CD8-positive, alpha-beta T cell (primary cell): ENCODE measurements at regions of chr4 and their contacts with region 1.

Region 1: DNA sequence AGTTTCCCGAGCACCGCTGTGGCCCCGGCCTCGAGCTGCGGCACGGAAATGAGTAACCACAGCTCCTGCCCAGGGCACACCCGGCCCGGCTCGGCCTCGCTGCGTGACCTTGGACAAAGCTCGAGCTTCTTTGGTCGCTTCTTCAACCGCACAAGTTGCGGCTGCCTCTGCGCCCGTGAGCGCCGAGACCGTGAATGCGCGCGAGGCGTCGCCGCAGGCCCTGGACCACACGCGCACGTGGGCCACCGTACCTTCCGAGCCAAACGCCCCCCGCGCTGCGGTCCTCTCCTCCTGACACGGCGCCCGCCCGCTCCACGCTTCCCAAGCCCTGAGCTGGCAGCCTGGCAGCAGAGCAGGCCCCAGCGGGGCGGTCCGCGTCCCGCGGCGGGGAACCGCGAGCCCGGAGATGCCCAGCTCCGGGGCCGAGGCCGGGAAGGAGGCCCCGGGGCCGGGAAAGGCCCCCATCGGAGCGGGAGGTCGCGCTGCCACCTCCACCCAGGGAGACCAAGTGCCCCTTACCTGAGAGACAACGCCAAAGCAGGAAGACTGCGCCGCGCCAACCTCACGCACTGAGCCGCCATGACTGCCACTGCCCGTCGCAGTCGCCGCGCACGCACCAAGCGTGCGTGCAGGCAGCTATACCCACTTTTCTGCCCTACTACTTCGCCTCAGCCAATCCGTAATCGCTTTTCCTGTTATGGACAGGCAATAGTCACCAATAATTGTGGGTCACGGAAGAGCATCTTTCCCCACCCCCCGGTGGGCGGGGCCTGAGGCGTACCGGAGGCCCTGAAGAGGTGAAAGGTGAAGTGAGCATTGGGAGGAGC is at the start of gene GRPEL1:
- DNase-seq: peak; percentile 100
- ATAC-seq: peak; percentile 92
- H3K4me3 ChIP-seq: peak within 1 kb of the TSS; percentile 86 to 87
- H3K4me3 Mint-ChIP-seq: peak within 1 kb of the TSS; percentile 95
- H3K27ac ChIP-seq: peak within 1 kb of the TSS; percentile 83 to 89
- H3K27ac Mint-ChIP-seq: peak within 1 kb of the TSS; percentile 97
- H3K4me1 ChIP-seq: peaks cover 35% of the 10 kb centered on the region
- H3K4me1 Mint-ChIP-seq: peaks cover 46% of the 10 kb centered on the region
- H3K27me3 ChIP-seq: no peaks in the 10 kb centered on the region
- H3K27me3 Mint-ChIP-seq: no peaks in the 10 kb centered on the region
- CTCF ChIP-seq: no peak
- total RNA-seq, gene GRPEL1: 61.1 to 61.5 TPM

Region 2: GRCh38 chr4:6207602-6208001 is 860.1 kb before region 1 on chr4:
- CTCF ChIA-PET with region 1: no interaction called
- POLR2A ChIA-PET with region 1: no interaction called
- intact Hi-C with region 1: no loop called
- DNase-seq: no peak
- ATAC-seq: no peak
- H3K4me3 ChIP-seq: no peak overlapping the region
- H3K4me3 Mint-ChIP-seq: no peak overlapping the region
- H3K27ac ChIP-seq: no peak overlapping the region
- H3K27ac Mint-ChIP-seq: no peak overlapping the region
- H3K4me1 ChIP-seq: no peaks in the 10 kb centered on the region
- H3K4me1 Mint-ChIP-seq: no peaks in the 10 kb centered on the region
- H3K27me3 ChIP-seq: no peaks in the 10 kb centered on the region
- H3K27me3 Mint-ChIP-seq: no peaks in the 10 kb centered on the region
- CTCF ChIP-seq: no peak

Region 3: GRCh38 chr4:6229095-6229494 is 838.6 kb before region 1 on chr4:
- CTCF ChIA-PET with region 1: no interaction called
- POLR2A ChIA-PET with region 1: no interaction called
- intact Hi-C with region 1: no loop called
- DNase-seq: no peak
- ATAC-seq: no peak
- H3K4me3 ChIP-seq: no peak overlapping the region
- H3K4me3 Mint-ChIP-seq: no peak overlapping the region
- H3K27ac ChIP-seq: no peak overlapping the region
- H3K27ac Mint-ChIP-seq: no peak overlapping the region
- H3K4me1 ChIP-seq: no peaks in the 10 kb centered on the region
- H3K4me1 Mint-ChIP-seq: no peaks in the 10 kb centered on the region
- H3K27me3 ChIP-seq: no peaks in the 10 kb centered on the region
- H3K27me3 Mint-ChIP-seq: peaks cover 18% of the 10 kb centered on the region
- CTCF ChIP-seq: no peak

Region 4: GRCh38 chr4:6538575-6538974 is 529.1 kb before region 1 on chr4:
- CTCF ChIA-PET with region 1: no interaction called
- POLR2A ChIA-PET with region 1: no interaction called
- intact Hi-C with region 1: no loop called
- DNase-seq: no peak
- ATAC-seq: no peak
- H3K4me3 ChIP-seq: no peak overlapping the region
- H3K4me3 Mint-ChIP-seq: no peak overlapping the region
- H3K27ac ChIP-seq: no peak overlapping the region
- H3K27ac Mint-ChIP-seq: no peak overlapping the region
- H3K4me1 ChIP-seq: no peaks in the 10 kb centered on the region
- H3K4me1 Mint-ChIP-seq: no peaks in the 10 kb centered on the region
- H3K27me3 ChIP-seq: peaks cover 0 to 6% of the 10 kb centered on the region in 2 experiments
- H3K27me3 Mint-ChIP-seq: peaks cover 17% of the 10 kb centered on the region
- CTCF ChIP-seq: no peak

Region 5: DNA sequence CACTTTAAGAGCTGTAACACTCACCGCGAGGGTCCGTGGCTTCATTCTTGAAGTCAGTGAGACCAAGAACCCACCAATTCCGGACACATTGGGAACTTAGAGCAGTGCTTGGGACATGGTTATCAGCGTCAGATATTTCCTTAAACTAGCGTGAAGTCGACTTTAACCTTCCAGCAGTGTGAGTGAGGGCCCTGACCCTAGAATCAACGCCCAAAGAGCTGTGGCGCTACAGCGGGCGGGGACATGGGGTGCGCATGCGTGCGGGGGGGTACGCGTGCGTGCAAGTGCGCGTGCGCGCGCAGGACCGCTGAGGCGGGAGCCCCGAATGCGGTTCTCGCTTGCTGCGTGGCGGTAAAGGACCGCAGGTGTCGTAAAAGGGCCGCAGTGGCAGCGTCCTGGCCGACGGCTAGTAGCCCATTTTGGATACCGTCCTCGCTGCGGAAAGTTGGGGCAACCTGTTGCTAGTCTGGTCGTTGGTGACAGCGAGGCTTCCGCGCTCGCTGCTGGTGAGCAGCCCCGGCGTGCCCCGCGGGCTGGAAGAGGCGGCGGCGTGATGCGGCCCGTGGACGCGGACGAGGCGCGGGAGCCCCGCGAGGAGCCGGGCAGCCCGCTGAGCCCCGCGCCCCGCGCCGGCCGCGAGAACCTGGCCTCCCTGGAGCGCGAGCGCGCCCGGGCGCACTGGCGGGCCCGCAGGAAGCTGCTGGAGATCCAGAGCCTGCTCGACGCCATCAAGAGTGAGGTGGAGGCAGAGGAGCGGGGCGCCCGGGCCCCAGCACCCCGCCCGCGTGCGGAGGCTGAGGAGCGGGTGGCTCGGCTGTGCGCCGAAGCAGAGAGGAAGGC is 393.8 kb before region 1 on chr4:
- CTCF ChIA-PET with region 1: interaction called, 6 read pairs
- POLR2A ChIA-PET with region 1: interaction called, 10 read pairs
- intact Hi-C with region 1: loop called in 1 of 2 experiments (anchors 1 kb)
- DNase-seq: peak; percentile 89 to 99 (median 93)
- ATAC-seq: peak; percentile 79
- H3K4me3 ChIP-seq: peak overlapping the region; percentile 62 to 92
- H3K4me3 Mint-ChIP-seq: peak overlapping the region; percentile 99
- H3K27ac ChIP-seq: peak overlapping the region; percentile 71 to 78
- H3K27ac Mint-ChIP-seq: peak overlapping the region; percentile 99
- H3K4me1 ChIP-seq: peaks cover 38% of the 10 kb centered on the region
- H3K4me1 Mint-ChIP-seq: peaks cover 48% of the 10 kb centered on the region
- H3K27me3 ChIP-seq: no peaks in the 10 kb centered on the region
- H3K27me3 Mint-ChIP-seq: no peaks in the 10 kb centered on the region
- CTCF ChIP-seq: no peak

Region 6: DNA sequence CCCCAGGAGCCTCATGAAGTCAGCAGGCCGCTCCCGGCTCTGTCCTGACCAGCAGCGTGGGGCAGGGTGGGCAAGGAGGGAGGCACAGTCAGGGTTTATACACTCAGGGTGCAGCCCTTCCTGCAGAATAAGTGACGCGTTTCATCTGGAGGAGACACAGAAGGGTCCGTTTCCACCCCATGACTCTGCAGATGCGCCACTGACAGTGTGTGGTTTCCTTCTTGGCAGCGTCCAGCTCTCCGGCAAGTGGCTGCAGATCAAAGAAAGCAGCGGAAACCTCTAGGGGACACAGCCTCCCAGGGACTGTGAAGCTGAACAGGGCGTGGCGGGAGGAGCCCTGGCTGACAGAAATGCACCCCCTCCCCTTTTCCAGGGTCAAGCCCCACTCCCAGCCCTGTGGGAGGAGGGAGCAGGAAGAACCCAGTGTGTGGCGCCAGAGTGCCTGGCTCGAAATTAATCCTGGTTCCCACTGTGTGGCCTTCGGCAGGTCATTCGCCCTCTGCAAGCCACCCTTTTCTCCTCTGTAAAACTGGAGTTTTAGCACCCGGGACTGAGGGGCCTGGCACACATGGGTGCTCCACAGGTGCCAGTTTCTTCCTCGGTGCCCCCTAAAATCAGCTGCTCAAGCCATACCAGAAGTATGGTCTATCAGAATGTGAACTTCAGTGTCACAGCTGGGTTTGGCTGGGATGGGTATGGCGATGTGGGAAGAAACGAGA is 175.3 kb before region 1 on chr4:
- CTCF ChIA-PET with region 1: interaction called, 7 read pairs
- POLR2A ChIA-PET with region 1: no interaction called
- intact Hi-C with region 1: loop called (anchors 1 to 5 kb)
- DNase-seq: peak in 6 of 9 experiments; percentile 17 to 66 (median 50)
- ATAC-seq: peak; percentile 70
- H3K4me3 ChIP-seq: peak overlapping the region in 1 of 2 experiments; percentile 16
- H3K4me3 Mint-ChIP-seq: peak overlapping the region; percentile 42
- H3K27ac ChIP-seq: peak overlapping the region in 1 of 2 experiments; percentile 44
- H3K27ac Mint-ChIP-seq: peak overlapping the region; percentile 60
- H3K4me1 ChIP-seq: peaks cover 27% of the 10 kb centered on the region
- H3K4me1 Mint-ChIP-seq: peaks cover 27% of the 10 kb centered on the region
- H3K27me3 ChIP-seq: no peaks in the 10 kb centered on the region
- H3K27me3 Mint-ChIP-seq: no peaks in the 10 kb centered on the region
- CTCF ChIP-seq: no peak

Region 7: DNA sequence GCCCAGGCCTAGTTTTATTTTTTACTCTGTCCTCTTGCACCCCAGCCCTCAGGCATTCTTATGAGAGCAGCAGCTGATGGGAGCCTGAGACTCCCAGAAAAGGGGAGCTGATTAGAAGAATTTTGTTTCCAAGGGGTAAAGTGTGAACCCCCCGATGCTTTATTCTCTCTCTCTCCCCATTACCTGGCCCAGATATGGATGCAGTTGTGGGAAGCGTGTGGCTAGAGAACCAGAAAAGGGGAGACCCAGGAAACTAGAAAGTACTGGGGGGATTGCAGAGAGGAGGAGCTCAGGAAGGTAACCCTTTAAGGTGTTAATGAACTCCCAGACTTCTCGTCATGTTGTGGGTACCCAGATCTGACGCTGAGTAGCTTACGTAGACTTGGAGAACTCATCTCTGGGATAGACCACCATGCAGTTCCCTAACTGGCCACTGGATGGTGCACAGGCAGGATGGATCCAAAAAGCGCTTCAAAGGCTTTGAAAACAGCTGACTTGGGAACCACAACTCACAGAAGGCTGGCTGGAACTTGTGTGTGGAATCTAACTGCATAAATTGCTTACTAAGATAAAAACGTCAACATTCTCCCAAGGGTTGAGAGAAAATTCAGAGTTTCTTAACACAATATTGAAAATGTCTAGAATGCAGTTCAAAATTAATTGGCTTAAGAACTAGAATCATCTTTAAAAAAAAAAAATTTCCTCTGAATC is 93.4 kb before region 1 on chr4:
- CTCF ChIA-PET with region 1: interaction called, 15 read pairs
- POLR2A ChIA-PET with region 1: interaction called, 3 read pairs
- intact Hi-C with region 1: loop called (anchors 1 kb)
- DNase-seq: peak; percentile 59 to 90 (median 85)
- ATAC-seq: peak; percentile 100
- H3K4me3 ChIP-seq: no peak overlapping the region
- H3K4me3 Mint-ChIP-seq: no peak overlapping the region
- H3K27ac ChIP-seq: no peak overlapping the region
- H3K27ac Mint-ChIP-seq: peak overlapping the region; percentile 18
- H3K4me1 ChIP-seq: peaks cover 8% of the 10 kb centered on the region
- H3K4me1 Mint-ChIP-seq: peaks cover 21% of the 10 kb centered on the region
- H3K27me3 ChIP-seq: no peaks in the 10 kb centered on the region
- H3K27me3 Mint-ChIP-seq: no peaks in the 10 kb centered on the region
- CTCF ChIP-seq: peak; percentile 85

Region 8: GRCh38 chr4:7037425-7037824 is 30.2 kb before region 1 on chr4:
- CTCF ChIA-PET with region 1: interaction called, 79 read pairs
- POLR2A ChIA-PET with region 1: interaction called, 103 read pairs
- intact Hi-C with region 1: loop called in 1 of 2 experiments (anchors 1 kb)
- DNase-seq: peak in 2 of 9 experiments; percentile 32 to 43
- ATAC-seq: peak; percentile 53
- H3K4me3 ChIP-seq: no peak overlapping the region
- H3K4me3 Mint-ChIP-seq: no peak overlapping the region
- H3K27ac ChIP-seq: no peak overlapping the region
- H3K27ac Mint-ChIP-seq: peak overlapping the region; percentile 11
- H3K4me1 ChIP-seq: no peaks in the 10 kb centered on the region
- H3K4me1 Mint-ChIP-seq: peaks cover 7% of the 10 kb centered on the region
- H3K27me3 ChIP-seq: no peaks in the 10 kb centered on the region
- H3K27me3 Mint-ChIP-seq: no peaks in the 10 kb centered on the region
- CTCF ChIP-seq: no peak

Region 9: GRCh38 chr4:7101692-7102515 is 34.2 kb after region 1 on chr4:
- CTCF ChIA-PET with region 1: interaction called, 12 read pairs
- POLR2A ChIA-PET with region 1: interaction called, 3 read pairs
- intact Hi-C with region 1: loop called (anchors 1 kb)
- DNase-seq: peak in 7 of 9 experiments; percentile 23 to 66 (median 50)
- ATAC-seq: peak; percentile 39
- H3K4me3 ChIP-seq: peak overlapping the region; percentile 84 to 90
- H3K4me3 Mint-ChIP-seq: peak overlapping the region; percentile 91
- H3K27ac ChIP-seq: no peak overlapping the region
- H3K27ac Mint-ChIP-seq: peak overlapping the region; percentile 45
- H3K4me1 ChIP-seq: peaks cover 25% of the 10 kb centered on the region
- H3K4me1 Mint-ChIP-seq: peaks cover 16% of the 10 kb centered on the region
- H3K27me3 ChIP-seq: no peaks in the 10 kb centered on the region
- H3K27me3 Mint-ChIP-seq: no peaks in the 10 kb centered on the region
- CTCF ChIP-seq: peak; percentile 46